Panc1 (cell line): ENCODE measurements at regions of chr1 and their contacts with region 1.

Region 1: DNA sequence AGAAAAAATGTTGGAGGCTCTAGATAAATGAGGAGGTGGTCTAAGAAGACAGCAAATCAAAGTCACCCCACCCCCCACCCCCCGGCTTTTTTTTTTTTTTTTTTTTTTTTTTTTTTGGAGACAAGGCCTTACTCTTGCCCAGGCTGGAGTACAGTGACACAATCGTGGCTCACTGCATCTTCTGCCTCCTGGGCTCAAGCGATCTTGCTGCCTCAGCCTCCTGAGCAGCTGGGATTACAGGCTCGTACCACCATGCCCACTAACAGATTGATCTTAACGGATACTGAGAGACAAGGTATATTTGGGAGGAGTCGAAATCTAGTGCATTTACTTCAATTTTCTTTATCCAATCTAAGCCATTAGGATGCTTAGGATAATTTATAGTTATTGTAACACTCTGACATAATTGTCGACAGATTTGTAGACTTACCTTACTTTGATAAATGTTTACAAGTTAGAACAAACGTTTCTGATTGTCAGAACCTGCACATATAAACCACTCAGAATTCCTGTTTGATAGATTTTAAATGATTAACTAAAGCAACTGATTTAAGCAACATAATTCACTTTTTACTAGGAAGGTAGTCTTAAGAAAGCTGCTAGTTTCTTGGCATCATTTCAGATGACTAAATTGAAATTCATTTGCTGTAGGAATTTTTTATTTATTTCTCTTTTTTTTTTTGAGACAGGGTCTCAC is 33.7 kb upstream of the NBL1 start:
- DNase-seq: no peak
- ATAC-seq: no peak
- H3K4me3 ChIP-seq: no peak overlapping the region
- H3K27ac ChIP-seq: no peak overlapping the region
- H3K4me1 ChIP-seq: peaks cover 18% of the 10 kb centered on the region
- H3K27me3 ChIP-seq: no peaks in the 10 kb centered on the region
- CTCF ChIP-seq: no peak

Region 2: DNA sequence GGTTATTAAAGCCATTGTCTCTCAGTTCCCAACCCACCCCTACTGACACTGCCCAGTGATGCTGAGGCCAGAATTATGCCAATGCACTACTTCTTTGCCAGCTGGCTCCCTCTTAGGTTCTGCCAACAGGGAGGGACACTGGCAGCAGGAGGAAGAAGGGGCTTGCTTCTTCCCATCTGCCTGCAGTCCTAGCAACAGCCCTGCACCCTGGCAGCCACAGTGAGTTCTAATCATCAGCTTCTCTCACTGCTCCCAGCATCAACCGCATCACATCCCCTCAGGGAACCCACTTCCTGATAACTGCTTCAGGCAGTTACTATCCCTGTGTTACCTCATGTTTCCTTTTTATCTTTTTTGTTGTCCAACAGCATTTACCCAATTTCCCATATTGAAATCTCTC is 486.6 kb before region 1 on chr1:
- CTCF ChIA-PET with region 1: no interaction called
- POLR2A ChIA-PET with region 1: no interaction called
- in situ Hi-C with region 1: no loop called
- intact Hi-C with region 1: no loop called
- DNase-seq: no peak
- ATAC-seq: no peak
- H3K4me3 ChIP-seq: no peak overlapping the region
- H3K27ac ChIP-seq: no peak overlapping the region
- H3K4me1 ChIP-seq: no peaks in the 10 kb centered on the region
- H3K27me3 ChIP-seq: no peaks in the 10 kb centered on the region
- CTCF ChIP-seq: no peak

Region 3: GRCh38 chr1:19442154-19443096 is 168.0 kb before region 1 on chr1:
- CTCF ChIA-PET with region 1: no interaction called
- POLR2A ChIA-PET with region 1: interaction called, 12 read pairs
- in situ Hi-C with region 1: no loop called
- intact Hi-C with region 1: no loop called
- DNase-seq: no peak
- ATAC-seq: no peak
- H3K4me3 ChIP-seq: 0 out of 4 replicates have a peak overlapping the region, but pooled peaks of 1 of the 2 experiments have one; percentile 5
- H3K27ac ChIP-seq: peak overlapping the region; percentile 99
- H3K4me1 ChIP-seq: peaks cover 99% of the 10 kb centered on the region
- H3K27me3 ChIP-seq: no peaks in the 10 kb centered on the region
- CTCF ChIP-seq: no peak

Region 4: DNA sequence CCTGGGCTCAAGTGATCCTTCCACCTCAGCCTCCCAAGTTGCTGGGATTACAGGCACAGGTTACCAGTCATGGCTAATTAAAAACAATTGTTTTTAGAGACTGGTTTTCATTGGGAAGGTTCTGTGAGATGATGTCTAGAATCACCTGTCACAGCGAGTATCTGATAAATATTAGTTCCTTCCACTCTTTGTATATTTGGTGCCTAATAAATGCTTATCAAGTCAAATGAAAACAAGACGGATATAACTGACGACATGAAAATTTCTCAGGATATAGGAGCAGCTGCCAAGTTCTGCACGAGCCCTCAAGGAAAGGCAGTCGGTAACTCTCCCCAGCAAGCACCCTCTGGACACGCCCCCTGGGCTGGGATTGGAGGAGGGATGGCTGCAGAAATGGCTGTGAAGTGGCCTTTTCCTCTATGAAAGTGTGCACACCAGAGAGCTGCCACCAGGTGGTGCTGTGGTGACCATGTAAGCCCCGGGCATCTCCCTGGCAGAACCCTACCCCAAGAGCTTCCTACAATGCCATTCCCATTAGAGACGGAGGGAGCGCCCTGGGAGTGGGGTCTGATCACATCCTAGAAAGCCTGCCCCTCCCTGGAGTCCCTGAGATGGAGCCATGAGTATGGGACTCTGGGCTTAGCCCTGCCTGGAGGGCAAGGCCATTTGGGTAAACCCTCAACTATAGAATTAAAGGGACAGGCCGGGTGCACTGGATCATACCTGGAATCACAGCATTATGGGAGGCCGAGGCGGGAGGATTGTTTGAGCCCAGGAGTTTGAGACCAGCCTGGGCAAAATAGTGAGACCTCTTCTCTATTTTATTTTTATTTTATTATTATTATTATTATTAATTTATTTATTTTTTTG is 105.1 kb after region 1 on chr1:
- CTCF ChIA-PET with region 1: no interaction called
- POLR2A ChIA-PET with region 1: no interaction called
- in situ Hi-C with region 1: no loop called
- intact Hi-C with region 1: no loop called
- DNase-seq: peak; percentile 84
- ATAC-seq: peak; percentile 98
- H3K4me3 ChIP-seq: no peak overlapping the region
- H3K27ac ChIP-seq: no peak overlapping the region
- H3K4me1 ChIP-seq: no peaks in the 10 kb centered on the region
- H3K27me3 ChIP-seq: no peaks in the 10 kb centered on the region
- CTCF ChIP-seq: peak; percentile 93